CD8-positive, alpha-beta T cell (primary cell): ENCODE measurements at regions of chr6 and their contacts with region 1.

Region 1: DNA sequence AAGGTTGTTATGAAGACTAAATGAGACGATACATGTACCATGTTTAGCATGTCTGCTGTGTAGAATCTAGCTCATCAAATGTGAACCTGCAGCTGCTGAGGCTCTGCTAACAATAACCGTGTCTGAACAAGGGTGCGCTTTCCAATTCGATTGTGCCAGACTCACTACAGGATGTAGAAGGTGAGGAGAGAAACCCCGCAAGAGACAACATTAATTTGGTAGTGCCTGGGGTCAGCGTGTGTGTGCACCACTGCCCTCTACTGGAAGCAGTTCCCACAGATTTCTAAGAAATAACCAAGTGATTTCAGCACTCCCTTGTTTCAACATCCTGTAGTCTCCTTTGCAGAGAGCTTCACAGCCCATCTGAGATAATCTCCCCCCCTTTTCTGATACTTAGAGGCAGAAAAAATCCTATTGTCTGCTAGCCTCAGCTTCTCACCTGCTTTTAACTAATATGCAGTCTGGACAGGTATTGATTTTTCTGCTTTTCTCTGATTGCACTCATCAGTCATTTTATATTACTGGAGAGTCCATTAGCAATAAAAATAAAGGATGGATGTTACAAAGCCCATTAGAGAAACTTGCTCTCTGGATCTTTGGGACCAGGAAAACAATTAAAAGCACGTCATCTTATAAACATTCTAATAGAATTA is 96.7 kb upstream of the BACH2 start:
- DNase-seq: peak; percentile 48 to 88 (median 74)
- ATAC-seq: peak; percentile 62
- H3K4me3 ChIP-seq: no peak overlapping the region
- H3K4me3 Mint-ChIP-seq: no peak overlapping the region
- H3K27ac ChIP-seq: no peak overlapping the region
- H3K27ac Mint-ChIP-seq: peak overlapping the region; percentile 52
- H3K4me1 ChIP-seq: peaks cover 24% of the 10 kb centered on the region
- H3K4me1 Mint-ChIP-seq: peaks cover 30% of the 10 kb centered on the region
- H3K27me3 ChIP-seq: no peaks in the 10 kb centered on the region
- H3K27me3 Mint-ChIP-seq: no peaks in the 10 kb centered on the region
- CTCF ChIP-seq: peak; percentile 73

Region 2: GRCh38 chr6:89819336-89820130 is 573.8 kb before region 1 on chr6 and contains the start of gene MDN1:
- CTCF ChIA-PET with region 1: interaction called, 4 read pairs
- POLR2A ChIA-PET with region 1: no interaction called
- intact Hi-C with region 1: loop called in 1 of 2 experiments (anchors 1 kb)
- DNase-seq: peak; percentile 70 to 97 (median 88)
- ATAC-seq: peak; percentile 92
- H3K4me3 ChIP-seq: peak within 1 kb of the TSS; percentile 85 to 90
- H3K4me3 Mint-ChIP-seq: peak within 1 kb of the TSS; percentile 98
- H3K27ac ChIP-seq: peak within 1 kb of the TSS; percentile 73 to 76
- H3K27ac Mint-ChIP-seq: peak within 1 kb of the TSS; percentile 97
- H3K4me1 ChIP-seq: peaks cover 29% of the 10 kb centered on the region
- H3K4me1 Mint-ChIP-seq: peaks cover 34% of the 10 kb centered on the region
- H3K27me3 ChIP-seq: no peaks in the 10 kb centered on the region
- H3K27me3 Mint-ChIP-seq: no peaks in the 10 kb centered on the region
- CTCF ChIP-seq: no peak
- total RNA-seq, gene MDN1: 39.5 to 43.2 TPM

Region 3: DNA sequence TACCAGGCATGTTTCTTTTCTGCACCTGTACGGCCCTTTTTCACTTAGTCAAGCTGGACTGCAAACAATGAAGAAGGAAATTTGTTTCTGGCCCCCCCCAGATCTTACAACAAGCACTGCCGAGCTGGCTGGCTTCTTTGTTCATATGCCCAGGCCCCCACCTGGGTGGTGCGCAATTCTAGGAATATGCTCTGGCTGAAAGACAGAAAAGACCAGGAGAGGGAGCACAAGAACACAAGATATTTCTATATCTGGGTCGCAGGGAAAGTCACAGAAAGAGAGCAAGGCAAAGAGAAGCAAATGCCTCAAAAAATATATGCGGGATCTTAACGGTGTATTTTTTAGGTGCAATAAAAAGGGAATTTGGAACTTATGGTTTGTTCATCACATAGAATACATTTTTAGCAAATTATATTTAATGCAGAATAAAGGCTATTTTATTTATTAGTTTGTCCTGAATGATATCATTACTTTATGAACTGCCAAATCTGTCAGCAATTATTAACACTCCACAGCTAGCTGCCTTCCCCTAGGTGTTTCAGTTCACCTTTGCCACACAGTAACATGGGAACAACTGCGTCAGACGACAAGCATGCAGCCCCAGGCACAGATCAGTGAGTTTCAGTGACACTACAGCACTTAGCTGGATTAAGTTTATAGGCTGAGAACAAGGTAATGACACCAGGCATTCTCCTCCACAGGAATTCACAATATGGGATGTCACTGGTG is 422.6 kb before region 1 on chr6:
- CTCF ChIA-PET with region 1: interaction called, 6 read pairs
- POLR2A ChIA-PET with region 1: interaction called, 4 read pairs
- intact Hi-C with region 1: loop called in 1 of 2 experiments (anchors 1 kb)
- DNase-seq: peak in 2 of 9 experiments; percentile 49 to 63
- ATAC-seq: peak; percentile 65
- H3K4me3 ChIP-seq: no peak overlapping the region
- H3K4me3 Mint-ChIP-seq: no peak overlapping the region
- H3K27ac ChIP-seq: no peak overlapping the region
- H3K27ac Mint-ChIP-seq: no peak overlapping the region
- H3K4me1 ChIP-seq: peaks cover 9% of the 10 kb centered on the region
- H3K4me1 Mint-ChIP-seq: peaks cover 26% of the 10 kb centered on the region
- H3K27me3 ChIP-seq: no peaks in the 10 kb centered on the region
- H3K27me3 Mint-ChIP-seq: no peaks in the 10 kb centered on the region
- CTCF ChIP-seq: peak; percentile 39

Region 4: DNA sequence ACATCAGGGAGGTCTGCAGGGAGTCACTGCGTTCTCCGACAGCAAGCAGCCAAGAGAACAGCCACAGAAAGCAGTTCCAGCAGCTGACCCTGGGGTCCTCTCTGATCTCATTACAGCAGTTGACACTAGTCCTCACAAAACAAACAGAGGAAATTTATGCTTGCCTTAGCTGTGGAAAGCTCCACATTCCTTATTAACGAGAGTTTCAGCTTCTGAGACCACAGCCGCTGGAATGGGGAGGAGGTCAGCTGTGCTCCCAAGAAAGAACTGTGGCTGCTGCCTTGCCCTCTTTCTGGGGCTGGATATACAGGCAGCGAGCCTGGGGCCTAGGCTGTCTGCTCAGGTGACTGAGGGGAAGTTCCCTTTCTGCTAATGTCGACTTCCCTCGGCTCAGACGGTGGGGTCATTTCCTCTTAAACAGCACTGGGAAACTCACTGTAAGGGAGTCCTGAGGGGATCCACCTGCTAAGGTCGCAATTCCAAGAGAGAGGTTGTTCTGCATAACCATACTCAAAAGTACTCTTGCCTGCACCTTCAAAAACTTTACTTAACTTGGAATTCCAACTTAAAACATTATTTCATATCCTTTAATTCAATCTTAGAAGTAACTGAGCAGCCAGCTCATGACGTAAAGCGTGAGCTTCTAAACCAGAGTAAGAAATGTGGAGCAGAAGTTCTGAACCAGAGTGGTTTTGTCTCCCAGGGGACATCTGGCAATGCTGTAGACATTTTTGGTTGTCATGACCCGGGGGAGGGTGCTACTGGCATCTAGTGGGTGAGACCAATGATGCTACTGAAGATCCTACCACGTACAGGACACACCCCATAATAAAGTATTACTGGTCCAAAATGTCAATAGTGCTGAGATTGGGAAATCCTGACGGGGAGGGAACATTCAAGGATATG is 177.0 kb before region 1 on chr6:
- CTCF ChIA-PET with region 1: interaction called, 6 read pairs
- POLR2A ChIA-PET with region 1: no interaction called
- intact Hi-C with region 1: loop called (anchors 5 kb)
- DNase-seq: peak in 7 of 9 experiments; percentile 21 to 84 (median 62)
- ATAC-seq: peak; percentile 29
- H3K4me3 ChIP-seq: peak overlapping the region in 1 of 2 experiments; percentile 16
- H3K4me3 Mint-ChIP-seq: peak overlapping the region; percentile 21
- H3K27ac ChIP-seq: peak overlapping the region; percentile 39 to 71
- H3K27ac Mint-ChIP-seq: no peak overlapping the region
- H3K4me1 ChIP-seq: peaks cover 100% of the 10 kb centered on the region
- H3K4me1 Mint-ChIP-seq: peaks cover 31% of the 10 kb centered on the region
- H3K27me3 ChIP-seq: no peaks in the 10 kb centered on the region
- H3K27me3 Mint-ChIP-seq: no peaks in the 10 kb centered on the region
- CTCF ChIP-seq: no peak

Region 5: DNA sequence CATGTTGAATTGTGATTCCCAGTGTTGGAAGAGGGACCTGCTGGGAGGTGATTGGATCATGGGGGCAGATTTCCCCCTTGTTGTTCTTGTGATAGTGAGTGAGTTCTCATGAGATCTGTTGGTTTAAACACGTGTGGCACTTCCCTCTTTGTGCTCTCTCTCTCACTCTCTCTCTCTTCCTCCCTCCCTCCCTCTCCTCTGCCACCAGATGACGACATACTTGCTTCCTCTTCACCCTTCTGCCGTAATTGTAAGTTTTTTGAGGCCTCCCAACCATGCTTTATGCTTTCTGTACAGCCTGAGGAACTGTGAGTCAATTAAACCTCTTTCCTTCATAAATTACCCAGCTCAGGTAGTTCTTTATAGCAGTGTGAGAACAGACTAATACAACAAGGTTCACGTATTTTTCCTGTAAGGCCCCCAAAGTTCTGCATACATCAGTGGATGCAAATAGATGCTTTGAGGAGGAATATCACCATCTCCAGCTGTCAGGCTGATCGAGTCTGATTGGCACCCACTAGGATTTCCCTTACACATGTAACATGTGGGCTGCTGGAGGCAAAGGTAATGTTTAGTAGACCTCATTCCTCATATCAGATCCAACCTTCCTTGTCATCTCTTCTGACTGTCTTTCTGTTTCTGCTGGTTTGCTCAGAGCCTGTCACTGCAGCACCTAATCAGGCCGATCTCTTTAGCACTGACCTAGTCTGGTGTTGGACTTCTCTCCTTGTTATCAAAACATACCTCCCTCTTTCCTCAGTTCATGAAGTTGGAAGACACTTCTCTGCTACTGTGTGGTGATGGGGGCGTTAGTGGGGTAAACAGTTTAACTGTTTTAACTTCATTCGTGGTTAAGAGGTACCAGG is 42.4 kb before region 1 on chr6:
- CTCF ChIA-PET with region 1: interaction called, 3 read pairs
- POLR2A ChIA-PET with region 1: no interaction called
- intact Hi-C with region 1: loop called in 1 of 2 experiments (anchors 5 kb)
- DNase-seq: peak; percentile 5 to 87 (median 44)
- ATAC-seq: peak; percentile 98
- H3K4me3 ChIP-seq: peak overlapping the region in 1 of 2 experiments; percentile 29
- H3K4me3 Mint-ChIP-seq: peak overlapping the region; percentile 23
- H3K27ac ChIP-seq: peak overlapping the region in 1 of 2 experiments; percentile 58
- H3K27ac Mint-ChIP-seq: peak overlapping the region; percentile 84
- H3K4me1 ChIP-seq: peaks cover 11% of the 10 kb centered on the region
- H3K4me1 Mint-ChIP-seq: peaks cover 18% of the 10 kb centered on the region
- H3K27me3 ChIP-seq: no peaks in the 10 kb centered on the region
- H3K27me3 Mint-ChIP-seq: no peaks in the 10 kb centered on the region
- CTCF ChIP-seq: no peak

Region 6: GRCh38 chr6:90413867-90414266 is 20.5 kb after region 1 on chr6:
- CTCF ChIA-PET with region 1: interaction called, 29 read pairs
- POLR2A ChIA-PET with region 1: interaction called, 7 read pairs
- intact Hi-C with region 1: loop called in 1 of 2 experiments (anchors 2 kb)
- DNase-seq: peak; percentile 57 to 92 (median 72)
- ATAC-seq: peak; percentile 84
- H3K4me3 ChIP-seq: peak overlapping the region; percentile 3 to 24
- H3K4me3 Mint-ChIP-seq: peak overlapping the region; percentile 79
- H3K27ac ChIP-seq: peak overlapping the region in 1 of 2 experiments; percentile 62
- H3K27ac Mint-ChIP-seq: peak overlapping the region; percentile 89
- H3K4me1 ChIP-seq: peaks cover 18% of the 10 kb centered on the region
- H3K4me1 Mint-ChIP-seq: peaks cover 33% of the 10 kb centered on the region
- H3K27me3 ChIP-seq: no peaks in the 10 kb centered on the region
- H3K27me3 Mint-ChIP-seq: no peaks in the 10 kb centered on the region
- CTCF ChIP-seq: no peak

Region 7: DNA sequence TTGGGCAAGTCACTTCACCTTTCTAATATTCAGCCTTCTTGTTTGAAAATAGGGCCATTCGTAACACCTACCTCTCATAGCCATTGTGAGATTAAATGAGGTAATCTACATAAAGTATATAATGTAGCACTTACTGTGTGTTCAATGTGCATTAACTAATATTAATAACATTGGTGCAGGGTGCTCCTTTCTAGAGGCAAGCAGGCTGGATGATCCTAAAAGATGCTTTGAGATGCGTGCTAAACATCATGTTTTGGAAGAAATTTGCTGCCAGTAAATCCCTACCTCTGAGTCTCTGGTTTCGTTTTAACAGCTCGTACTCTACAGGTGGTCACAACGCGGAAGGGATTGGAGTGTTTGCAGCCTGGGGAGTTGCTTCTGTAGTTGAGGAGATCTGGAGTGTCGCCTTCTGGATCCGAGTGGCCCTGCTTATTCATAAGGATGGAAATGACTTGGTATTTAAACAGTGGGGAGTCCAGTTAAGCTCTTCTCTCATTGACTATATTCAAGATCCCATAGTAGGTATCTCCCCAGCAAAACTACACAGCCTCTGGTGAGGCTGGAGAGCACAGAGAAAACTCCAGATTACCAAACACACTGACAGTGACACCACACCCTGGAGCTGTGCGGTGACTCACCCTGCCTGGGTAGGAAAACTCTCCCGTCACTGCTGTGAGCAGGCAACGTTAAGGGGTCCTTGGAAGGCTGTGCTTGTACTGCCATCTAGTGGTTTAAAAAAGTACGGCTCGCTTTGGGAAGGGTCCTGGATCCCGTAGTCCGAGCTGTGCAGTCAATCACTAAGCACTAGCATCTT is 85.6 kb after region 1 on chr6:
- CTCF ChIA-PET with region 1: interaction called, 47 read pairs
- POLR2A ChIA-PET with region 1: no interaction called
- intact Hi-C with region 1: loop called (anchors 1 to 2 kb)
- DNase-seq: peak; percentile 51 to 91 (median 81)
- ATAC-seq: peak; percentile 99
- H3K4me3 ChIP-seq: no peak overlapping the region
- H3K4me3 Mint-ChIP-seq: no peak overlapping the region
- H3K27ac ChIP-seq: no peak overlapping the region
- H3K27ac Mint-ChIP-seq: peak overlapping the region; percentile 10
- H3K4me1 ChIP-seq: peaks cover 11% of the 10 kb centered on the region
- H3K4me1 Mint-ChIP-seq: peaks cover 19% of the 10 kb centered on the region
- H3K27me3 ChIP-seq: no peaks in the 10 kb centered on the region
- H3K27me3 Mint-ChIP-seq: no peaks in the 10 kb centered on the region
- CTCF ChIP-seq: peak; percentile 88

Region 8: GRCh38 chr6:91852252-91852651 is 1458.9 kb after region 1 on chr6:
- CTCF ChIA-PET with region 1: no interaction called
- POLR2A ChIA-PET with region 1: no interaction called
- intact Hi-C with region 1: no loop called
- DNase-seq: no peak
- ATAC-seq: no peak
- H3K4me3 ChIP-seq: no peak overlapping the region
- H3K4me3 Mint-ChIP-seq: no peak overlapping the region
- H3K27ac ChIP-seq: no peak overlapping the region
- H3K27ac Mint-ChIP-seq: no peak overlapping the region
- H3K4me1 ChIP-seq: no peaks in the 10 kb centered on the region
- H3K4me1 Mint-ChIP-seq: no peaks in the 10 kb centered on the region
- H3K27me3 ChIP-seq: no peaks in the 10 kb centered on the region
- H3K27me3 Mint-ChIP-seq: no peaks in the 10 kb centered on the region
- CTCF ChIP-seq: no peak